Endothelial cell of umbilical vein (primary cell): ENCODE measurements at regions of chr3 and their contacts with region 1.

Region 1: DNA sequence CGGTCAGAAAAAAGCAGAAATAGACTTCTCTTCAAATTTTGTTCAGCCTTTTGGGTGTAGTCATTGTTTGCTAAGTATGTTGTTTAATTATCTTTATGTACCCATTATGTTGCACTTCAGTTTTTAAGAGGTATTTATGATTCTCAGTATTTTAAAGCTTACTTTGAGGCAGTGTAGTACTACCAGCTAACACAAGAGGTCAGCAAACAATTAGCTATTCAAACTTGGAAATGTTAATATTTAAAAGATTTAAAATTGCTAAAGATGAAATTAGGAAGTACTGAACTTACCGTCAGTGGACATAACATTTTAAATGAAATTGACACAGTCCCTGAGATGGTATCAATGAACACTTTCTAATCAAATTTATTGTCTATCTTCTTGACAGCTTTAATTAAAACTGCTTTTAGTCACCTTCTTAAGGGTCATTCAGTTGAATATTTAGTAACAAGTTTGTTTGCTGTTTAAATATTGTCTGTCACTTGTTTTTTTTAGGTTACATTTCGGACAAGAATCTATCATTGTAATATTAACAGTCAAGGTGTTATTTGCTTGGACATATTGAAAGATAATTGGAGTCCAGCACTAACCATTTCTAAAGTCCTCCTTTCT is 28.1 kb downstream of the NKIRAS1 start:
- DNase-seq: peak; percentile 79
- H3K4me3 ChIP-seq: no peak overlapping the region
- H3K27ac ChIP-seq: no peak overlapping the region
- H3K4me1 ChIP-seq: no peaks in the 10 kb centered on the region
- H3K27me3 ChIP-seq: no peaks in the 10 kb centered on the region
- CTCF ChIP-seq: peak; percentile 50 to 53
- POLR2A ChIP-seq: no peak

Region 2: DNA sequence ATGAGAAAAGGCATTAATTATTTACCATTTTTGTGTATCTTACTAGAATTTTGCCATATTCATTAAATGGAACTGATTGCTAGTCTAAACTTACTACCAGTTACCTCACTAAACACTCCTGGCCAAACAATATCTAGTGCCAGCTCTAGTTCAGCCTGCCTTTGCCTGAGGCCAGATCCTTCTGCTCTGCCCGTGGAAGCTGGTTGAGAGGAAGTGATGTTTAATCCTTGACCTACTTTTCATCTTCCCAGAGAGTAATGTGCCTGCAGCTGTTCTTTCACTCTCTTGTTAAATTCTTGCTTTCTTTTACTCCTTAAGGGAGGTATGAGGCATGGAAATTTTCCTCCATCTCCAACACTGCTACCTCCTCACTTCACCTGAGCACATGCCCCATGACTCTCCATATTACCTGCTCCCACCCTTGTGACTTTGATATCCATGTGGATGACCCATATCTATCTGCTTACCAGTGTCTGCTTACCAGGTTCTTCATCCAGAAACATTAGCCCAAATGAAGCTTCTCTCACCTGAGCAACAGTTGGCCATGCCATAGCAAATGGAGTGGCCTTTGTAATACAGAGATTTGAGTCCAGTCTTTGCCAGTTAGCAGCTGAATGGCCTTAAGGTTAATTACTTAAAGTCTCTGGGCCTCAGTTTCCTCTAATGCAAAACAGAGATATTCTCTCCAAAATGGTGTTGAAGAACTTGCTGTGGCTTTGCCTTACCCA is 29.5 kb before region 1 on chr3:
- CTCF ChIA-PET with region 1: interaction called, 13 read pairs
- POLR2A ChIA-PET with region 1: no interaction called
- dilution Hi-C with region 1: no loop called
- intact Hi-C with region 1: no loop called
- DNase-seq: peak; percentile 56
- H3K4me3 ChIP-seq: no peak overlapping the region
- H3K27ac ChIP-seq: no peak overlapping the region
- H3K4me1 ChIP-seq: peaks cover 26% of the 10 kb centered on the region
- H3K27me3 ChIP-seq: no peaks in the 10 kb centered on the region
- CTCF ChIP-seq: no peak
- POLR2A ChIP-seq: no peak

Region 3: GRCh38 chr3:23877329-23877980 is 11.3 kb before region 1 on chr3:
- CTCF ChIA-PET with region 1: interaction called, 29 read pairs
- POLR2A ChIA-PET with region 1: no interaction called
- dilution Hi-C with region 1: no loop called
- intact Hi-C with region 1: no loop called
- DNase-seq: peak; percentile 21
- H3K4me3 ChIP-seq: no peak overlapping the region
- H3K27ac ChIP-seq: no peak overlapping the region
- H3K4me1 ChIP-seq: peaks cover 43% of the 10 kb centered on the region
- H3K27me3 ChIP-seq: no peaks in the 10 kb centered on the region
- CTCF ChIP-seq: no peak
- POLR2A ChIP-seq: no peak

Region 4: DNA sequence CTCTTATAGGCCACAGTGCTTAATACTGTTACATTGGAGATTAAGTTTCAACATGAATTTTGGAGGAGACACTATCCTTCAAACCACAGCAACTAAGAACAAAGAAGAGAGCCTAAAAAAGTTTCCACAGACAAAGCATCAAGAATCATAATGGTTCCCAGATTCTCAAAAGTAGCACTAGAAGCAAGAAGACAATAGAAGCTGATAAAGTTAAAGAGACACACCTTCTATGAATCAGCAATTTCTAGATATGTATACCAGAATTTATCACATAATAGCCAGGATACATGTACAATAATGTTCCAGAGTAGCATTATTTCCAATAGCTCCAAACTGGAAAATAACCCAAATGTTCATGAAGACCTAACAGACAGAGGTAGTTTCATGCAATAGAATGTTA is 15.8 kb after region 1 on chr3:
- CTCF ChIA-PET with region 1: interaction called, 19 read pairs
- POLR2A ChIA-PET with region 1: no interaction called
- dilution Hi-C with region 1: no loop called
- intact Hi-C with region 1: no loop called
- DNase-seq: no peak
- H3K4me3 ChIP-seq: no peak overlapping the region
- H3K27ac ChIP-seq: no peak overlapping the region
- H3K4me1 ChIP-seq: no peaks in the 10 kb centered on the region
- H3K27me3 ChIP-seq: no peaks in the 10 kb centered on the region
- CTCF ChIP-seq: no peak
- POLR2A ChIP-seq: no peak

Region 5: DNA sequence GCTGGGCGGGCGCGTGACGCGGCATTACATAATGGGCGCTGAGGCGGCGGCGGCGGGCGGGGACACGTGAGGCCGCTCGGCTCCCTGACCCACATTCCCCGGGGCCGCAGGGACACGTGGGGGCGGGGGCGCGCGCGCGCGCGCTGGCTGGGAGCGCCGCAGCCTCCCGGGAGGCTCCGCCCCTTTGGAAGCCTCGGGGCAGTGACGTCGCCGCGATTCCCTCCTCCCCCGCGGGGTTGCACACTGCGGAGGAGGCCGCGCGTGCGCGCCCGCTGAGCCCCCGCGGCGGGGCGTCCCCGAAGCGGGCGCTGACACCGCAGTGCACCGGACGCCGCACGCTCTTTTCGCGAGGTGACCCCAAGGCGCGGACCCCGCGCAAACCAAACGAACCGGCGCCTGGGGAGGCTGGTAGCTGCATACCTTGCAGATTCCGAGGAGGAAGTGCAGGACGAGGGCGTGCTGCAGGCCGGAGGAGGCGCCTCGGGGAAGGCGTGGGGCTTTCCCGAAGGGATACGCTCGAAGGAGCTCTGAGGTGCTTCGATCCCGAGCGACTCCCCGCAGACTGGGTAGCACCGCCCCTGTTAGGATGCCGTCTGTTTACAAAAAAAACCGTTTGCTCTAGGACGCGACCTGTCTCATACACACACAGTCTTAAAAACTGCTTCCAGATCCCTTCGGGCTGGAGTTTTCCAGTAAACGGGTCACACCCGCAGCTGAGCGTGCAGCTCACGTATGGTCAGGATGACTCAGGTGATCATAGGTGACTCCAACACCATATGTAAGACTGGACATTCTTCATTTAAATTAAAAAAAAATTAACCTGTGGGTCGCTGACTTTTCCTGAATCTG is 57.4 kb after region 1 on chr3:
- CTCF ChIA-PET with region 1: interaction called, 3 read pairs
- POLR2A ChIA-PET with region 1: interaction called, 4 read pairs
- dilution Hi-C with region 1: no loop called
- intact Hi-C with region 1: loop called (anchors 2 kb)
- DNase-seq: peak; percentile 98
- H3K4me3 ChIP-seq: peak overlapping the region; percentile 29 to 92 (median 63)
- H3K27ac ChIP-seq: peak overlapping the region; percentile 90
- H3K4me1 ChIP-seq: peaks cover 17% of the 10 kb centered on the region
- H3K27me3 ChIP-seq: peaks cover 3 to 10% of the 10 kb centered on the region in 2 experiments
- CTCF ChIP-seq: no peak
- POLR2A ChIP-seq: no peak

Region 6: GRCh38 chr3:23999012-23999641 is 110.4 kb after region 1 on chr3:
- CTCF ChIA-PET with region 1: interaction called, 9 read pairs
- POLR2A ChIA-PET with region 1: no interaction called
- dilution Hi-C with region 1: no loop called
- intact Hi-C with region 1: loop called (anchors 1 kb)
- DNase-seq: peak; percentile 79
- H3K4me3 ChIP-seq: no peak overlapping the region
- H3K27ac ChIP-seq: no peak overlapping the region
- H3K4me1 ChIP-seq: peaks cover 3% of the 10 kb centered on the region
- H3K27me3 ChIP-seq: peaks cover 4 to 8% of the 10 kb centered on the region in 2 experiments
- CTCF ChIP-seq: peak; percentile 67 to 87
- POLR2A ChIP-seq: no peak

Region 7: DNA sequence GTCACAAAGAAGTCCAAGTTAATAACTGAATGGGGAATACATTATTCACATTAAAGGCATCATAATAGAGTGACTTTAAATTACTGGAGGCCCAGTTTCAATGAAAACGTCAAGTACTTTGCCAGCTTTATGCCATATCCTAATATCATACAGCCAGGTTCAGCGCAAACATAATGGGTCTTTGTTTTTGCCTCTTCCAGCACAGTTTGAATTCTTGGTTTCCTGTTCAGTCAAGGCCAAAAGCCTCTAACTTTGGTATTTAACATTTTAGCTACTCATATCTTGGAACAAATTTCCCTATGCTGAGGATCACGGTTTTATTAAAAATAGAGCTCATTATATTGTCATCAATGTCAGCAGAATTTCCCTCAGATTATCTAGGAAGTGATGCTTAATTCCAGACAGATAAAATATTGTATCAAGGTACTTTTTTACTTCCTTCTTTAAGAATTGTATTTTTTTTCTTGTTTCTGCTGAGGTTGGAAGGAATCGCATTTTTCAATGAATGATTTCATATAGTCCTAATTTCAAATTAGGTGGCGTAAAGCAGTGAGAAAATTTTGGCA is 336.7 kb after region 1 on chr3:
- CTCF ChIA-PET with region 1: no interaction called
- POLR2A ChIA-PET with region 1: no interaction called
- dilution Hi-C with region 1: no loop called
- intact Hi-C with region 1: no loop called
- DNase-seq: no peak
- H3K4me3 ChIP-seq: no peak overlapping the region
- H3K27ac ChIP-seq: no peak overlapping the region
- H3K4me1 ChIP-seq: peaks cover 5% of the 10 kb centered on the region
- H3K27me3 ChIP-seq: no peaks in the 10 kb centered on the region
- CTCF ChIP-seq: no peak
- POLR2A ChIP-seq: no peak